GM12878 (cell line): ENCODE measurements at regions of chr11 and their contacts with region 1.

Region 1: DNA sequence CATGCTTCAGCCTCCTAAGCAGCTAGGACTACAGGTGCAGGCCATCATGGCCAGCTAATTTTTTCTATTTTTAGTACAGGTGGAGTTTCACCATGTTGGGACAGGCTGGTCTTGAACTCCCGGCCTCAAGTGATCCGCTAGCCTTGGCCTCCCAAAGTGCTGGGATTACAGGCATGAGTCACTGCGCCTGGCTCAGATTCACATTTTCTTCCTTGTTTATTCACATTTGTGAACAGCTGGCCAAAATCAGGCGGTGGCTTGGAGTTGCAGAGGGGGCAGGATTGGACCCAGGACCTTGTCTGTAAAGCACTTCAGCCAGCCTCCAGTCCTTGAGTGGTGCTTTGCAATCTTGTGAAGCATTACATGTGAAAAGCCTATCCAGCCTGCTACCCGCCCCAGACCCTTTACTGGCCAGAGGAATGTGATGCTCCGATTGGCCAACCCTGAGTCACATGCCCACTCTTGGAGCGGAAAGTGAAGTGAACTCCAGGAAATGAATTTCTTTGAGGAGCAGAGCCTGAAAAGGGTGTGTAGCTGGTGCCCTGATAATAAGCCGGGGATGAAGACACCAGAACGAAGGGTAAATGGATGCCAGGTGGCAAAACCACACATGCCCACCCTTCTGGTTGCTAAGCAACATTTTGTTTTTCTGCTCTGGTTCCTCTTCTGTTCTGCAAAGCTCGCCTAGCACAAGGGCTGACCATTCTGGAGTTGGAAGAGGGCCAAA is 62.6 kb upstream of the PTPRJ start:
- DNase-seq: no peak
- ATAC-seq: peak; percentile 63
- H3K4me3 ChIP-seq: no peak overlapping the region
- H3K27ac ChIP-seq: no peak overlapping the region
- H3K4me1 ChIP-seq: peaks cover 34% of the 10 kb centered on the region
- H3K27me3 ChIP-seq: no peaks in the 10 kb centered on the region
- CTCF ChIP-seq: no peak
- EP300 ChIP-seq: no peak
- POLR2A ChIP-seq: no peak
- RAD21 ChIP-seq: no peak

Region 2: DNA sequence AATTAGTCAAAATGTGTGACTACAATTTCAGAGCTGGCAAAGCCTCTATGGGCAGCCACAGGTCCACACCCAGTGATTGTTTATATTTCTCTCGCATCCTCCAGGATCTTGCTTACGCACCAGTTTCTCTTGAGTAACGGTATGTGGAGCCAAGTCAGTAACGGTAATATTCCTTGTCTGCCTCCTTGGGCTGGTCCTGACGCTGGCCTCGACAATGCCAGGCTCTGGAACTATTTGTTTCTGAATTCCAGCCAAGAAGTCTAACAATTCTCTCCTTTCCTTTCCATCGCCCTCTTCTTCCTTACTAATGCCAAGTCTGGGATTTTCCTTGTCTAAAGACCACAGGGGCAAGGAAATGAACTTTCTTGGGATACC is 59.6 kb before region 1 on chr11:
- CTCF ChIA-PET with region 1: interaction called, 3 read pairs
- POLR2A ChIA-PET with region 1: interaction called, 5 read pairs
- RAD21 ChIA-PET with region 1: no interaction called
- SMC1A ChIA-PET with region 1: no interaction called
- in situ Hi-C with region 1: no loop called
- intact Hi-C with region 1: loop called (anchors 5 kb)
- DNase-seq: no peak
- ATAC-seq: no peak
- H3K4me3 ChIP-seq: no peak overlapping the region
- H3K27ac ChIP-seq: peak overlapping the region; percentile 41; the same call in 1 of the 2 replicates
- H3K4me1 ChIP-seq: peaks cover 66% of the 10 kb centered on the region
- H3K27me3 ChIP-seq: no peaks in the 10 kb centered on the region
- CTCF ChIP-seq: no peak
- EP300 ChIP-seq: no peak
- POLR2A ChIP-seq: no peak
- RAD21 ChIP-seq: no peak

Region 3: DNA sequence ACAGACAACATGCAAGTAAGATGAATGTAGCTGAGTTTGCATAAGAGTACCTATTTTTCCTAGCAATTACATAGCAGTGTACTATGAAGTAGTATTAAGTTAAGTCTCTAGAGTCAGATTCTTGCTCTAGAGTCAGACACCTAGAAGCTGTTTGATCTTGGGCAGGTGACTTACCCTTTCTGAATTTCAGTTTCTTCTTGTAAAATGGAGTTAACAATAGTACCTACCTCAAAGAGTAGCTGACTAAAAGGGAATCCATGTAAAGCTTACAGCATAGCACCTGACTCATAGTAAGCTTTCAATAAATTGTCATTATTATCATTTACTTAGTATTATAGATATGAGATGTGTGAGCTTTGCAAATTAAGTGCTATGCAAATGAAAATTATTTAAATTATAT is 14.7 kb after region 1 on chr11:
- CTCF ChIA-PET with region 1: interaction called, 10 read pairs
- POLR2A ChIA-PET with region 1: interaction called, 7 read pairs
- RAD21 ChIA-PET with region 1: interaction called, 7 read pairs
- SMC1A ChIA-PET with region 1: interaction called, 7 read pairs
- in situ Hi-C with region 1: no loop called
- intact Hi-C with region 1: no loop called
- DNase-seq: no peak
- ATAC-seq: peak; percentile 54; the same call in 2 of the 3 replicates
- H3K4me3 ChIP-seq: no peak overlapping the region
- H3K27ac ChIP-seq: no peak overlapping the region
- H3K4me1 ChIP-seq: peaks cover 4% of the 10 kb centered on the region
- H3K27me3 ChIP-seq: peaks cover 0 to 2% of the 10 kb centered on the region in 2 experiments; a peak in 2 of 4 replicates
- CTCF ChIP-seq: no peak
- EP300 ChIP-seq: no peak
- POLR2A ChIP-seq: no peak
- RAD21 ChIP-seq: no peak